ENCODE measurements at regions of chr1 and their contacts with region 1.

Region 1: GRCh38 chr1:115112496-115113375 is 23.4 kb upstream of the TSPAN2 start:
- DNase-seq: peak; percentile 46
- CTCF ChIP-seq: peak; percentile 94

Region 2: GRCh38 chr1:114979278-114979891 is 133.4 kb before region 1 on chr1:
- CTCF ChIA-PET with region 1: interaction called, 25 read pairs
- POLR2A ChIA-PET with region 1: no interaction called
- DNase-seq: peak; percentile 13
- CTCF ChIP-seq: peak; percentile 67

Region 3: DNA sequence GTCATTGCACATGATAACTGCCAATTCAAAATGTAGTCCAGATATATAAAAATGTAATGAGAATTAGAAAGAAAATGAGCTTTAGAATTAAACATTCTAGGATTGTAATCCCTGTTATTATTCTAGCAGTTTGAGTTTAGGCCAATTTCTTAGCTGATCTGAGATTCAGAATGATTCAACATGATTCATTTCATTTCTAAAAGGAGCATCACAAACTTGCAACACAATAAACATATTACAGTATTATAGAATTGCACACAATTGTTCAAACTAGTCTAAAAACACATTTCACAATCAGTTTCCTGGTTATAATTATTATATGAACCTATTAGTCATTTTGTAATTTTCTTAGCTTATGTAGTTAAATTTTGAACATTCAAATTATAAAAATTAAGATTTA is 126.5 kb before region 1 on chr1:
- CTCF ChIA-PET with region 1: interaction called, 25 read pairs
- POLR2A ChIA-PET with region 1: no interaction called
- DNase-seq: no peak
- CTCF ChIP-seq: no peak

Region 4: GRCh38 chr1:115052454-115053083 is 60.2 kb before region 1 on chr1:
- CTCF ChIA-PET with region 1: interaction called, 12 read pairs
- POLR2A ChIA-PET with region 1: no interaction called
- DNase-seq: peak; percentile 54
- CTCF ChIP-seq: peak; percentile 93

Region 5: GRCh38 chr1:115098979-115099692 is 13.6 kb before region 1 on chr1:
- CTCF ChIA-PET with region 1: interaction called, 13 read pairs
- POLR2A ChIA-PET with region 1: no interaction called
- DNase-seq: peak; percentile 34
- CTCF ChIP-seq: no peak

Region 6: DNA sequence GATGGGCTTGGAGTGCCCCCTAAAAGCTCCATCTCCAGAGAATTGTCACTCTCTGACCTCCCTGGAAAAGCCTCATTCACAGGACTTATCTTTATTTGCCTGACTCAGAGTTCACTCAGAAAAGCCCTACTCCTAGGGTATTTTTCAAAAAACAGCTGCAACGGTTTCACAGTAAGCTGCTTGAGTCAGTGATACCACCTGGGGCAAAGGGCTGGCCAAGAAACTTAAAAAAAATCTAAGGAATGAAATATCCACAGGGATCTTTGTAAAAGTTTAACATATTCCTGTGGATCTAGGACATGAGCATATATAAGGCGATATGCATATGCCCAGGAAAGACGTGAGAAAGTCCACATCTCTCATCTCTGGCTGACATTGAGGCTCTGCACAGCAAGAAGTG is 10.4 kb after region 1 on chr1:
- CTCF ChIA-PET with region 1: interaction called, 48 read pairs
- POLR2A ChIA-PET with region 1: no interaction called
- DNase-seq: no peak
- CTCF ChIP-seq: no peak

Region 7: DNA sequence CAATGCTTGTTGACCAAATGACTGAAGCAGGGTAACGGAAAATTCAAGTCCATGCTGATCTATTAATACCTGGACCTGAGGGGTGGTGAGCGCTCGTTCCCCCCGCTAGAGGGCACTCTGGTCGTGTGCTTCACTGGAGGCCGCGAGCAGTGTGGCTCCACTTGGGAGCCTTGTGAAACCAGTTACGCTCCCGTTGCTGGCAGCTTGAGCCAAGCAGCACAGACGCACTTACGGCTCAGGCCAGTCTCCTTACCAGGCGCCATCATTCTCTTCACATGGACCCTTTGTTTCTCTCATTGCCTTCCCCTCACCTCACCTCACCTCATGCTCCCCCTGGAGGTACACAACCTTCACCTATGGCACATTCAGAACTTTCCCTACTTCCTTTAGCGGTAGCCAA is 26.2 kb after region 1 on chr1:
- CTCF ChIA-PET with region 1: interaction called, 17 read pairs
- POLR2A ChIA-PET with region 1: no interaction called
- DNase-seq: peak; percentile 79
- CTCF ChIP-seq: peak; percentile 90